GM12878 (cell line): ENCODE measurements at regions of chr22 and their contacts with region 1.

Region 1: GRCh38 chr22:31661851-31662656 is at the start of gene PISD:
- DNase-seq: peak; percentile 89
- ATAC-seq: peak; percentile 87
- H3K4me3 ChIP-seq: peak within 1 kb of the TSS; percentile 79
- H3K27ac ChIP-seq: peak within 1 kb of the TSS; percentile 81
- H3K4me1 ChIP-seq: peaks cover 12% of the 10 kb centered on the region
- H3K27me3 ChIP-seq: no peaks in the 10 kb centered on the region
- CTCF ChIP-seq: no peak
- EP300 ChIP-seq: no peak
- POLR2A ChIP-seq: peak; percentile 91
- RAD21 ChIP-seq: no peak
- polyA plus RNA-seq, gene PISD: 31.1 to 44.9 TPM

Region 2: GRCh38 chr22:31630331-31631329 is 31.4 kb before region 1 on chr22:
- CTCF ChIA-PET with region 1: interaction called, 51 read pairs
- POLR2A ChIA-PET with region 1: interaction called, 28 read pairs
- RAD21 ChIA-PET with region 1: interaction called, 17 read pairs
- SMC1A ChIA-PET with region 1: interaction called, 88 read pairs
- in situ Hi-C with region 1: no loop called
- intact Hi-C with region 1: no loop called
- DNase-seq: no peak
- ATAC-seq: peak; percentile 81
- H3K4me3 ChIP-seq: peak overlapping the region; percentile 93
- H3K27ac ChIP-seq: peak overlapping the region; percentile 83
- H3K4me1 ChIP-seq: peaks cover 38% of the 10 kb centered on the region
- H3K27me3 ChIP-seq: no peaks in the 10 kb centered on the region
- CTCF ChIP-seq: peak in 1 of 3 experiments; percentile 17; a peak in 2 of 6 replicates
- EP300 ChIP-seq: no peak
- POLR2A ChIP-seq: peak; percentile 58; the same call in 1 of the 2 replicates
- RAD21 ChIP-seq: no peak

Region 3: GRCh38 chr22:31646186-31647089 is 15.6 kb before region 1 on chr22:
- CTCF ChIA-PET with region 1: interaction called, 4 read pairs
- POLR2A ChIA-PET with region 1: interaction called, 6 read pairs
- RAD21 ChIA-PET with region 1: interaction called, 8 read pairs
- SMC1A ChIA-PET with region 1: interaction called, 88 read pairs
- in situ Hi-C with region 1: no loop called
- intact Hi-C with region 1: no loop called
- DNase-seq: no peak
- ATAC-seq: peak; percentile 80
- H3K4me3 ChIP-seq: no peak overlapping the region
- H3K27ac ChIP-seq: peak overlapping the region; percentile 75
- H3K4me1 ChIP-seq: peaks cover 29% of the 10 kb centered on the region
- H3K27me3 ChIP-seq: no peaks in the 10 kb centered on the region
- CTCF ChIP-seq: no peak
- EP300 ChIP-seq: peak; percentile 53 to 82; a peak in 2 of 4 replicates
- POLR2A ChIP-seq: no peak
- RAD21 ChIP-seq: no peak

Region 4: GRCh38 chr22:31749636-31750364 is 87.7 kb after region 1 on chr22 and contains the start of gene PRR14L:
- CTCF ChIA-PET with region 1: interaction called, 7 read pairs
- POLR2A ChIA-PET with region 1: interaction called, 3 read pairs
- RAD21 ChIA-PET with region 1: interaction called, 4 read pairs
- SMC1A ChIA-PET with region 1: interaction called, 6 read pairs
- in situ Hi-C with region 1: no loop called
- intact Hi-C with region 1: loop called (anchors 10 kb)
- DNase-seq: peak; percentile 86
- ATAC-seq: peak; percentile 78
- H3K4me3 ChIP-seq: peak within 1 kb of the TSS; percentile 92
- H3K27ac ChIP-seq: peak within 1 kb of the TSS; percentile 94
- H3K4me1 ChIP-seq: peaks cover 13% of the 10 kb centered on the region
- H3K27me3 ChIP-seq: no peaks in the 10 kb centered on the region
- CTCF ChIP-seq: peak in 1 of 3 experiments; percentile 18; a peak in 2 of 6 replicates
- EP300 ChIP-seq: peak in 1 of 2 experiments; percentile 88; a peak in 2 of 4 replicates
- POLR2A ChIP-seq: peak; percentile 99
- RAD21 ChIP-seq: no peak
- polyA plus RNA-seq, gene PRR14L: 4.2 to 12.3 TPM

Region 5: DNA sequence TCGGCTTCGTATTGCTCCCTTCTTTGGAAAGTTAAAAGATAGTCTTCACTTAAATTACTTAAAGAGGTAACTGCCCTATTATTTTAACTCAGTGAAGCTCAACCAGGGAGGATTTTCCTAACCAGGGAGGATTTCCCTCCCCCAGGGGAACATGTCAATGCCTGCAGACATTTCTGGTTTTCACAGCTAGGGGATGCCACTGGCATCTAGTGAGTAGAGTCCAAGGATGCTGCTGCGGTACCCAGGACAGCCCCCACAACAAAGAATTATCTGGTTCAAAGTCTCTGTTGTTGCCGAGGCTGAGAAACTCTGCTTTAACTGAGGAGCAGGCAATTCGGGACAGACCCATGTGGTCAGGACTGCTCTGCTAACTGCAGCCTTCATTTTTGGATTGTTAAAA is 174.0 kb after region 1 on chr22:
- CTCF ChIA-PET with region 1: no interaction called
- POLR2A ChIA-PET with region 1: no interaction called
- RAD21 ChIA-PET with region 1: no interaction called
- SMC1A ChIA-PET with region 1: no interaction called
- in situ Hi-C with region 1: no loop called
- intact Hi-C with region 1: no loop called
- DNase-seq: no peak
- ATAC-seq: no peak
- H3K4me3 ChIP-seq: no peak overlapping the region
- H3K27ac ChIP-seq: no peak overlapping the region
- H3K4me1 ChIP-seq: no peaks in the 10 kb centered on the region
- H3K27me3 ChIP-seq: no peaks in the 10 kb centered on the region
- CTCF ChIP-seq: peak in 1 of 3 experiments; percentile 21; a peak in 1 of 6 replicates
- EP300 ChIP-seq: no peak
- POLR2A ChIP-seq: no peak
- RAD21 ChIP-seq: no peak

Region 6: DNA sequence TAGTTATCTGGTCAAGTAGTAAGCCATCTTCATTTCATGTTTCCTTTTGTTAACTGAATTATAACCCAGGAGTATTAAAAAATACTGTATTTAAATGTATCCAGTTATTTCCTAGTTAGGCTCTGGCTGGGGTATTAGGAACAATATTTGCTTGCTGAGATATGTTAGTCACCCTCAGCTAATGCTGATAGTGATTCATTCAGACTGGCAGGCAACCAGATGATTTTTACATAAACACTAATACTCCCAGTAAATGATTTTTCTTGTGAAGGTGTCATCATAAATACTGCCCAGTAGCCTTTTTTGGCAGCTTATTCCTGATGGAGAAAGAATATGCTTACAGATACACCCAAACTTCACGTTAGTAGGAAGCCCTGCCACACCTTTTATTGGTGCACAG is 290.4 kb after region 1 on chr22:
- CTCF ChIA-PET with region 1: interaction called, 140 read pairs
- POLR2A ChIA-PET with region 1: interaction called, 5 read pairs
- RAD21 ChIA-PET with region 1: interaction called, 29 read pairs
- SMC1A ChIA-PET with region 1: interaction called, 99 read pairs
- in situ Hi-C with region 1: loop called (anchors 5 kb)
- intact Hi-C with region 1: loop called (anchors 2 kb)
- DNase-seq: no peak
- ATAC-seq: no peak
- H3K4me3 ChIP-seq: no peak overlapping the region
- H3K27ac ChIP-seq: no peak overlapping the region
- H3K4me1 ChIP-seq: peaks cover 4% of the 10 kb centered on the region; the same call in 1 of the 2 replicates
- H3K27me3 ChIP-seq: no peaks in the 10 kb centered on the region
- CTCF ChIP-seq: no peak
- EP300 ChIP-seq: no peak
- POLR2A ChIP-seq: no peak
- RAD21 ChIP-seq: no peak

Region 7: GRCh38 chr22:32080904-32081303 is 418.9 kb after region 1 on chr22:
- CTCF ChIA-PET with region 1: interaction called, 6 read pairs
- POLR2A ChIA-PET with region 1: no interaction called
- RAD21 ChIA-PET with region 1: interaction called, 3 read pairs
- SMC1A ChIA-PET with region 1: no interaction called
- in situ Hi-C with region 1: loop called (anchors 10 kb)
- intact Hi-C with region 1: loop called (anchors 5 kb)
- DNase-seq: peak; percentile 7
- ATAC-seq: peak; percentile 84
- H3K4me3 ChIP-seq: no peak overlapping the region
- H3K27ac ChIP-seq: no peak overlapping the region
- H3K4me1 ChIP-seq: no peaks in the 10 kb centered on the region
- H3K27me3 ChIP-seq: no peaks in the 10 kb centered on the region; a peak in 1 of 4 replicates
- CTCF ChIP-seq: peak; percentile 70 to 79 (median 73)
- EP300 ChIP-seq: no peak
- POLR2A ChIP-seq: no peak
- RAD21 ChIP-seq: peak; percentile 83